Astrocyte of the cerebellum (primary cell): ENCODE measurements at regions of chr5 and their contacts with region 1.

Region 1: GRCh38 chr5:152147286-152147685 is 222.6 kb upstream of the GLRA1 start:
- DNase-seq: no peak
- H3K4me3 ChIP-seq: no peak overlapping the region
- CTCF ChIP-seq: no peak

Region 2: DNA sequence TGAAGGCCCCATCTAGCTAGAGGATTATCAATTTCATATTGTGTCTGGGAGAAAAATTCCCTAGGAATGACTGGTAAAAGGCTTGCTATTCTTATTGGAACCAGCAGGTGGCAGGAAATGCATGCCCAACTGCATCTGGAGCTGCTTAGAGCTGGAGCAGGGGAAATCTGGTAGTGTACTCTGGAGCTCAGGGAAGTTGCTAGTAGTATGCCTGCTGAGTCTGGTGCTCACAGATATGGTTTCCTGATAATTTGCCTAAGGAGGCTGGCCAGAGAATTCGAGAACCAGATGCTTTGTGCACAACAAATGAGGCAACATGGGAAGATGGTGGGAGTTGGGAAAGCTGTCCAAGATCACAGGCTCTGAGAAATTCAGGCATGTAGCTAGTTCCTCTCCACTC is 321.8 kb before region 1 on chr5:
- in situ Hi-C with region 1: loop called (anchors 5 kb)
- DNase-seq: peak; percentile 57
- H3K4me3 ChIP-seq: no peak overlapping the region
- CTCF ChIP-seq: peak; percentile 86